Activated CD4-positive, alpha-beta T cell treated with anti-CD3 and anti-CD28 coated beads, Interleukin-2, amount 10 ng/mL, durations not matched to agents 24 days and 14 days (primary cell): ENCODE measurements at regions of chr9 and their contacts with region 1.

Region 1: GRCh38 chr9:127423934-127424675 is at the start of gene ZNF79:
- DNase-seq: peak; percentile 98
- H3K4me3 Mint-ChIP-seq: peak within 1 kb of the TSS; percentile 99
- H3K27ac Mint-ChIP-seq: peak within 1 kb of the TSS; percentile 94
- H3K4me1 Mint-ChIP-seq: peaks cover 43% of the 10 kb centered on the region
- H3K27me3 Mint-ChIP-seq: no peaks in the 10 kb centered on the region
- total RNA-seq, gene ZNF79: 17.2 and 17.3 TPM in 2 replicates

Region 2: GRCh38 chr9:127388037-127388855 is 35.9 kb before region 1 on chr9:
- intact Hi-C with region 1: loop called (anchors 1 kb)
- DNase-seq: peak; percentile 96
- H3K4me3 Mint-ChIP-seq: peak overlapping the region; percentile 62
- H3K27ac Mint-ChIP-seq: peak overlapping the region; percentile 78
- H3K4me1 Mint-ChIP-seq: peaks cover 27% of the 10 kb centered on the region
- H3K27me3 Mint-ChIP-seq: peaks cover 64% of the 10 kb centered on the region

Region 3: DNA sequence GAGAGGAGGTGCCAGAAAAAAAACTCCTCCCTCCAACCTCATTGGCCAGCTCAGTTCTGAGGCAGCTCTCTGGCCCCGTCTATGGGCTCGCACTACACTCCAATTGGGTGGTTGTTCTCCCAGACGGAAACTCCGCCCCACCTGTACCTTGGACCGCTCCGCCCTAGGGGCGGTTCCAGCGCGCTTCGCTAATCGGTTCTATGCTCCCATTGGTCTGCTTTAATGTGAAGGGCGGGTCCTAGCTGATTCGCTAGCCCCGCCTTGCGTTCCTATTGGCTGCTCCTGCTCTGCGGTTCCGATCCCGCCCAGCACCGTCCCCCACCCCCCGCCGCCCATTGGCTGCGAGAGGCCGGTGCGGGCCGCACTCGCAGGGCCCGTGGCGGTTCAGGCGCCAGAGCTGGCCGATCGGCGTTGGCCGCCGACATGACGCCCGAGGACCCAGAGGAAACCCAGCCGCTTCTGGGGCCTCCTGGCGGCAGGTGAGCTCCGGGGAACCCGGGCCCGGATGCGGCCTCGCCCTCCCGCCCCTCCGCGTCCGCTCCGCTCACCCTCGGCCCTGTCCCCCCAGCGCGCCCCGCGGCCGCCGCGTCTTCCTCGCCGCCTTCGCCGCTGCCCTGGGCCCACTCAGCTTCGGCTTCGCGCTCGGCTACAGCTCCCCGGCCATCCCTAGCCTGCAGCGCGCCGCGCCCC is 27.2 kb before region 1 on chr9 and contains the start of gene SLC2A8:
- intact Hi-C with region 1: loop called (anchors 2 kb)
- DNase-seq: peak; percentile 97
- H3K4me3 Mint-ChIP-seq: peak within 1 kb of the TSS; percentile 77
- H3K27ac Mint-ChIP-seq: peak within 1 kb of the TSS; percentile 53
- H3K4me1 Mint-ChIP-seq: peaks cover 10% of the 10 kb centered on the region
- H3K27me3 Mint-ChIP-seq: peaks cover 67% of the 10 kb centered on the region
- total RNA-seq, gene SLC2A8: 3.9 and 5.8 TPM in 2 replicates

Region 4: GRCh38 chr9:127450830-127451724 is 27.0 kb after region 1 on chr9 and contains the starts of genes LRSAM1 and RPL12:
- intact Hi-C with region 1: loop called (anchors 1 kb)
- DNase-seq: peak; percentile 99
- H3K4me3 Mint-ChIP-seq: peak within 1 kb of the TSS; percentile 98
- H3K27ac Mint-ChIP-seq: peak within 1 kb of the TSS; percentile 98
- H3K4me1 Mint-ChIP-seq: peaks cover 46% of the 10 kb centered on the region
- H3K27me3 Mint-ChIP-seq: no peaks in the 10 kb centered on the region
- total RNA-seq, gene LRSAM1: 24.6 and 26.4 TPM in 2 replicates
- total RNA-seq, gene RPL12: 1,245 and 1,252 TPM in 2 replicates

Region 5: DNA sequence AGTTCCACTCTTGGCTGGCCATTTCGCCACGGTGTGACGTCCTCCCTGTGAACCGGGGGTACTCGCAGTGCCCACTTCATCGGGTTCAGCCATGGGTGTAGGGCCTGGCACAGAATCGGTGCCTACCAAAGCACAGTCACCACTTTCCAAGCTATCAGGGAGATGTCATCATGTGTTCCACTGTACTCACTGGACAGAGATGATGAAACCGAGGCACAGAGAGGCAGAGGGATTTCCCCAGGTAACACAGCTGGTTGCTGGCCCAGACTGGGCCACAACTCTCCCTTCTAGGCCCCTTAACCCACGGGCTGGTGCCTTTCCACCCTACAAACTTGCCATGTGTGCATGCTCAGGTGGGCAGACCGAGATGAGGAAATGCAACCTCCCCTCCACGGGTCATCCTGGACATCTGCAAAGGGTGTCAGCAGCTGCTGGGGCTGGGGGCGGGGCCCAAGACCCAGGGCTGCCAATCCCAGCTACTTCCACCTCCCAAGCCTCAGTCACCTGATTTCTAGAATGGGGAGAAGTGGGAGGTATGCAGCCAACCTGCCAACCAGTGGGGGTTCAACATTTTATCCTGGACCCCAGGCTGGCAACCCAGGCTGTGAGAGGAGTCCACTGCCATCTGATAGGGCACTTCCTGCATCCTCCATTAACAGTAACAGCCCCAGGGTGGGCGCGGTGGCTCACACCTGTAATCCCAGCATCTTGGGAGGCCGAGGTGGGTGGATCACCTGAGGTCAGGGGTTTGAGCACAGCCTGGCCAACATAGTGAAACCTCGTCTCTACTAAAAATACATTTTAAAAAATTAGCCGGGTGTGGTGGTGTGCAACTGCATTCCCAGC is 355.3 kb after region 1 on chr9:
- intact Hi-C with region 1: loop called (anchors 5 kb)
- DNase-seq: peak; percentile 86
- H3K4me3 Mint-ChIP-seq: peak overlapping the region; percentile 98
- H3K27ac Mint-ChIP-seq: peak overlapping the region; percentile 98
- H3K4me1 Mint-ChIP-seq: peaks cover 55% of the 10 kb centered on the region
- H3K27me3 Mint-ChIP-seq: no peaks in the 10 kb centered on the region